Gastrocnemius medialis (tissue), 4 donors: ENCODE measurements at regions of chr18 and their contacts with region 1.

Region 1: GRCh38 chr18:51029694-51030536 is at the start of gene SMAD4:
- DNase-seq: peak; percentile 93 to 95
- ATAC-seq: peak; percentile 90 to 94
- H3K4me3 ChIP-seq: peak within 1 kb of the TSS; percentile 62 to 67 (median 64)
- H3K27ac ChIP-seq: peak within 1 kb of the TSS; percentile 90 to 97 (median 92)
- H3K4me1 ChIP-seq: peaks cover 46 to 57% of the 10 kb centered on the region in 2 donors
- H3K27me3 ChIP-seq: no peaks in the 10 kb centered on the region
- CTCF ChIP-seq: no peak
- POLR2A ChIP-seq: peak; percentile 93 to 96
- total RNA-seq, gene SMAD4: 148 to 210 (median 168) TPM

Region 2: GRCh38 chr18:50967714-50968661 is 61.9 kb before region 1 on chr18 and contains the start of gene ELAC1:
- in situ Hi-C with region 1: loop called in 2 of 4 experiments (anchors 5 to 10 kb)
- intact Hi-C with region 1: loop called (anchors 1 kb)
- DNase-seq: peak; percentile 66 to 86
- ATAC-seq: peak; percentile 78 to 87
- H3K4me3 ChIP-seq: peak within 1 kb of the TSS; percentile 78 to 89 (median 80)
- H3K27ac ChIP-seq: peak within 1 kb of the TSS; percentile 92 to 99 (median 96)
- H3K4me1 ChIP-seq: peaks cover 30 to 33% of the 10 kb centered on the region in 2 donors
- H3K27me3 ChIP-seq: no peaks in the 10 kb centered on the region
- CTCF ChIP-seq: no peak
- POLR2A ChIP-seq: peak; percentile 96 to 99
- total RNA-seq, gene ELAC1: 1.6 to 13.7 (median 4.0) TPM

Region 3: DNA sequence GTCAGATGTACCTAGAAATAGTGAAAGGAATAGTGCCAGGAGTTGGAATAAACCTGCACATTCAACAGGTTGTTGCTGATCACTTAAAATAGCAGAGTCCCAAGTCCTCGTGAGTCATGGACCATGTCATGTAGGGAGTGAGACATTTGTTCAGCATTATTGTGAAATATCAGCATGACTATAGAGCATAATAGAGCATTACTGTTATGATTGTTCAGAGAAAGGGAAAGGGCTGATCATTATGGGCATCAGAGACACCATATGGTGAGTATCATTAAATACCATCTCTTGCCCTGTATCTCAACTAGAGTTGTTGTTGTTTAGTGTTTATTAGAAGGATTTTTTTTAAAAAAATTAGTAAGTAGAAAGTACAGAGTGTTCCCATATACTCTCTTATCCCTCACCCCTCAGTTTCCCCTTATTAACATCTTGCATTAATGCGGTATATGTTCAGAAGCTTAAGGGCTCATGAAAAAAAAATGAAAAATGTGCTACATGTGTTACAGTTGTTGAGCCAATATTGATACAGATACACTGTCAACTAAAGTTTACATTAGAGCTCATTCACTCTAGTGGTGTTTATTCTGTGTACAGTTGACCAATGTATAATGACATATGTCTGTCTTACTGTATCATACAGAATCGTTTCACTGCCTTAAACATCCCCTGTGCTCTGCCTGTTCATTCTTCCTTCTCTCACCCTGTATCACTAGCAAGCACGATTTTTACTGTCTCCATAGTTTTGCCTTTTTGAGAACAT is 56.4 kb before region 1 on chr18:
- in situ Hi-C with region 1: loop called in 2 of 4 experiments (anchors 5 to 10 kb)
- intact Hi-C with region 1: loop called (anchors 1 kb)
- DNase-seq: peak; percentile 64 to 67
- ATAC-seq: peak; percentile 95 to 96
- H3K4me3 ChIP-seq: no peak overlapping the region
- H3K27ac ChIP-seq: peak overlapping the region; percentile 81 to 98 (median 87)
- H3K4me1 ChIP-seq: peaks cover 34 to 37% of the 10 kb centered on the region in 2 donors
- H3K27me3 ChIP-seq: no peaks in the 10 kb centered on the region
- CTCF ChIP-seq: no peak
- POLR2A ChIP-seq: peak in 1 of 2 donors; percentile 36

Region 4: GRCh38 chr18:50992351-50992762 is 37.6 kb before region 1 on chr18:
- in situ Hi-C with region 1: no loop called
- intact Hi-C with region 1: loop called (anchors 1 kb)
- DNase-seq: no peak
- ATAC-seq: no peak
- H3K4me3 ChIP-seq: no peak overlapping the region
- H3K27ac ChIP-seq: peak overlapping the region in 1 of 4 donors; percentile 20
- H3K4me1 ChIP-seq: peaks cover 17 to 34% of the 10 kb centered on the region in 2 donors
- H3K27me3 ChIP-seq: no peaks in the 10 kb centered on the region
- CTCF ChIP-seq: no peak
- POLR2A ChIP-seq: no peak